OCI-LY7 (cell line): ENCODE measurements at regions of chr11 and their contacts with region 1.

Region 1: GRCh38 chr11:111454561-111455192 is 57.5 kb downstream of the BTG4 start:
- DNase-seq: peak; percentile 60
- H3K4me3 ChIP-seq: no peak overlapping the region
- H3K27ac ChIP-seq: no peak overlapping the region
- H3K4me1 ChIP-seq: peaks cover 11% of the 10 kb centered on the region
- CTCF ChIP-seq: peak; percentile 64

Region 2: DNA sequence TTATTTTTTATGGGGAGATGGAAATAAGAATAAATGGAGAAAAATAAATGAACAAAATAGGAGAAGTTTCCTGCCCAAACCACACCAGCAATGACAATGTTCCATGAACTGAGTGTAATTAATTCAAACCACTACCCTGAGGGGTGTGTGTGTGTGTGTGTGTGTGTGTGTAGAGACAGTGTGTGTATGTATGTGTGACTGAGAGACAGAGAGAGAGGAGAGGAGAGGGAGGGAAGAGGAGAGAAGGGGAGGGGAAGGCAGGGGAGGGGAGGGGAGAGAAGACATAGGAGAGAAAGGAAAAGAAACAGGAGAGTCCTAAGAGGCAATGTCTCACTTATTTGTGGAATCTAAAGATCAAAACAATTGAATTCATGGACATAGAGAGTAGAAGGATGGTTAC is 10.6 kb before region 1 on chr11:
- CTCF ChIA-PET with region 1: no interaction called
- POLR2A ChIA-PET with region 1: no interaction called
- intact Hi-C with region 1: no loop called
- DNase-seq: no peak
- H3K4me3 ChIP-seq: peak overlapping the region; percentile 35
- H3K27ac ChIP-seq: no peak overlapping the region
- H3K4me1 ChIP-seq: peaks cover 60% of the 10 kb centered on the region
- CTCF ChIP-seq: no peak

Region 3: GRCh38 chr11:111557425-111558111 is 102.9 kb after region 1 on chr11:
- CTCF ChIA-PET with region 1: no interaction called
- POLR2A ChIA-PET with region 1: interaction called, 3 read pairs
- intact Hi-C with region 1: loop called (anchors 10 kb)
- DNase-seq: no peak
- H3K4me3 ChIP-seq: no peak overlapping the region
- H3K27ac ChIP-seq: no peak overlapping the region
- H3K4me1 ChIP-seq: no peaks in the 10 kb centered on the region
- CTCF ChIP-seq: no peak

Region 4: DNA sequence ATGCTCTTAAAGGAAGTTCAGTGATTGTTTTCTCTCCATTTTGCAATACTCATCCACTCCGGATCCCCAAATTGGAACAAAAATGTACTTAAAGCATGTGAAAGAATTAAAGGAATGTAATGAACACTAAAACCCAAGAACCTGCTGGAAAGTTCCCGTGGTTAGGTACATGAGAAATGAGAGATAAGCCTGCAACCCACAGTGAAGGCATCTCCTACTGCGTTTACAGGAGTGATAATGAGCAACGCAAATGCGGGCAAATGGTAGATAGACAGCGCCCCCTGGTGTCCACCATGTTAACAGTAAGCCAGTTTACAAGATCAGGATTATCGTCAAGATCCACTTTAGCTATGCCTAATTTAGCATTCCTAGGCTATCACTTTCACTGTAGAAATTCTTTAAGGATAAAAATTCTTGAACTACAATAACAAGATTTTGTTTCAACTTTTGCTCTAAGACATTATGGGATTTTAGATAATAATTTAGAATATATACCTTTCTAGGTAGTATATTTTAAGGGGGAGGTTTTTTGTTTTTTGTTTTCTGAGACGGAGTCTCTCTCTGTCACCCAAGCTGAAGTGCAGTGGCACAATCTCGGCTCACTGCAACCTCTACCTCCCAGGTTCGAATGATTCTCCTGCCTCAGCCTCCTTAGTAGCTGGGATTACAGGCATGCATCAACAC is 386.8 kb after region 1 on chr11:
- CTCF ChIA-PET with region 1: no interaction called
- POLR2A ChIA-PET with region 1: no interaction called
- intact Hi-C with region 1: loop called (anchors 2 kb)
- DNase-seq: peak; percentile 85
- H3K4me3 ChIP-seq: no peak overlapping the region
- H3K27ac ChIP-seq: no peak overlapping the region
- H3K4me1 ChIP-seq: no peaks in the 10 kb centered on the region
- CTCF ChIP-seq: peak; percentile 98

Region 5: GRCh38 chr11:111963931-111964340 is 509.3 kb after region 1 on chr11:
- CTCF ChIA-PET with region 1: no interaction called
- POLR2A ChIA-PET with region 1: no interaction called
- intact Hi-C with region 1: no loop called
- DNase-seq: no peak
- H3K4me3 ChIP-seq: no peak overlapping the region
- H3K27ac ChIP-seq: no peak overlapping the region
- H3K4me1 ChIP-seq: no peaks in the 10 kb centered on the region
- CTCF ChIP-seq: no peak